Transverse colon (tissue), 4 donors: ENCODE measurements at regions of chr11 and their contacts with region 1.

Region 1: DNA sequence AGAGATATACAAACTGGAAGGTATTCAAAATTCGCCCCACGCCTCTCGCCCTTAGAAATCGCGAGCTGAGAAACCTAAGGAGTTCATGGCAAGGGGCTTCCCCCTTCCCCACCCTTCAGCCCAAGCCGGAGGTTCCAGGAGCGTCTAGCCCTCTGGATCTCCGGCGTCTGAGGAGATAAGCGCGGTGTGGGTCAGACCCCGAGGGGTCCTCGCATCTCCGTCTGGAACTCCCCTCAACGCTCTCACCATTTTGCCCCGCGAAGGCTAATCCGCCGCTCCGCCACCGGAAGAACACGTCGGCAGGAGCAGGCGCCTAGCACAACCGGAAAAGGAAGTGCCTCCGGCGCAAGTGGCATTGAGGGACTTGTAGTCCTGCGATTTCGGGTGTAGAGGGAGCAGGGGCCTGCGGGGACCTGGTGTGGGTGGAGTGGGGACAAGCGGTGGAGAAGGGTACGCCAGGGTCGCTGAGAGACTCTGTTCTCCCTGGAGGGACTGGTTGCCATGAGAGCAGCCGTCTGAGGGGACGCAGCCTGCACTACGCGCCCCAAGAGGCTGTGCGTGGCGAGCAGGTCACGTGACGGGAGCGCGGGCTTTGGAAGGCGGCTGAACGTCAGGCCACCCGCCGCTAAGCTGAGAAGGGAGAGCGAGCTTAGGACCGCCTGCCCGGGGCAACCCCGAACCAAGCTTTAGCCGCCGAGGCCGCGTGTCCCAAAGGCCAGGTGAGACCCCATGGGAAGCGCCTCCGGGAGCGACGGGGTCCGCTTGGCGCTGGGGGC is at the starts of genes FEN1 and TMEM258:
- DNase-seq: peak; percentile 88
- H3K4me3 ChIP-seq: peak within 1 kb of the TSS; percentile 75 to 81 (median 80)
- H3K27ac ChIP-seq: peak within 1 kb of the TSS; percentile 90 to 98 (median 94)
- H3K4me1 ChIP-seq: peaks cover 5 to 23% (median 22%) of the 10 kb centered on the region in 4 donors
- H3K27me3 ChIP-seq: no peaks in the 10 kb centered on the region
- CTCF ChIP-seq: peak in 3 of 5 experiments; percentile 8 to 44 (median 10)
- EP300 ChIP-seq: no peak
- POLR2A ChIP-seq: peak; percentile 69
- total RNA-seq, gene FEN1: 1.00 to 9.4 (median 4.5) TPM
- total RNA-seq, gene TMEM258: 8.2 to 34.7 (median 23.7) TPM

Region 2: DNA sequence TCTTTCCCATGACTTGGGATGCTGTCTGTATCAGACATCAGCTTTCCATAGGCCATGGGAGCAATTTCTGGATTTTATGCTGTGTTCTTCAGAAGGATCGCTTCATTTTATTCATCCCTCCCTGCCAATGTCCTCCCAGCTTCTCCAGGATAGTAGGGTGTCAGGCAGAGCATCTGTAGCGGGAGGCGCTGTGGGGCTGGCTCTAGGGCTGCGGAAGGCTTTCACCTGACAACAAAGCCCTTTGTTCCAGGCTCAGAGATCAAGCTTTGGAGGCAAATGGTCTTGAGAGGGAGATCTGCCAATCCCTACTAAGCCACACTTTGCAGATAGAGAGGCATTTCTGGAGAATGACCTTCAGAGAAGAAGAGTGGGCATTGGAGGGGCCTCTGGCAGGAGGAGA is 204.4 kb after region 1 on chr11:
- in situ Hi-C with region 1: no loop called
- intact Hi-C with region 1: no loop called
- DNase-seq: no peak
- H3K4me3 ChIP-seq: no peak overlapping the region
- H3K27ac ChIP-seq: no peak overlapping the region
- H3K4me1 ChIP-seq: peaks cover 4 to 17% (median 12%) of the 10 kb centered on the region in 4 donors
- H3K27me3 ChIP-seq: no peaks in the 10 kb centered on the region
- CTCF ChIP-seq: no peak
- EP300 ChIP-seq: no peak
- POLR2A ChIP-seq: no peak

Region 3: GRCh38 chr11:62108017-62108750 is 315.7 kb after region 1 on chr11:
- in situ Hi-C with region 1: loop called in 3 of 4 experiments (anchors 10 to 25 kb)
- intact Hi-C with region 1: no loop called
- DNase-seq: no peak
- H3K4me3 ChIP-seq: no peak overlapping the region
- H3K27ac ChIP-seq: no peak overlapping the region
- H3K4me1 ChIP-seq: peaks cover 6 to 26% (median 12%) of the 10 kb centered on the region in 4 donors
- H3K27me3 ChIP-seq: no peaks in the 10 kb centered on the region
- CTCF ChIP-seq: peak; percentile 72 to 85 (median 84)
- EP300 ChIP-seq: no peak
- POLR2A ChIP-seq: no peak

Region 4: DNA sequence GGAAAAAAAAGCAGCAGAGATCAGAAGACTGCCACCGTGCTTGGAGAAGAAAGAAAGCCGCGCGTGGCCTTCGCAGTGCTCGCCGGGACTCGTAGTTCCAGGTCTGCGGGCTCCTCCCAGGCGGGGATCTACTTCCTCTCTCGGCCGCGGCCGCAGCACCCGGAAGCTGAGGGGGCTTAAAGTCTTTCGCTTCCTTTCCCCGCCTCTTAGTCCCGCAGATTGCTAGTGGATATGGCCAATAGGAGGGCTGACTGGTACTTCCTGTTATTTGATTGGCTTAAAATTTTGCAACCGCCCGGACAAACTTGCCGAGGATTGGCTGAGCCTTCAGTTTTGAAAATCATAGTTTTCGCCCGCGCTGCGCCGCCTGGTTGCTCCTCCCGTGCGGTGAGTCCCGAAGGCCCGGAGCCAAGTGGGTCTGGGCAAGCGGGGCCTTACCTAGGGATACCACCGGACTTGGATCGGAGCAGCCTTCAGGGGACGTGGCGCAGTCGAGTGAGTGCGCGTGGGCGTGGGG is 331.2 kb after region 1 on chr11 and contains the start of gene INCENP:
- in situ Hi-C with region 1: loop called in 2 of 4 experiments (anchors 25 kb)
- intact Hi-C with region 1: no loop called
- DNase-seq: peak; percentile 96
- H3K4me3 ChIP-seq: peak within 1 kb of the TSS; percentile 72 to 95 (median 83)
- H3K27ac ChIP-seq: peak within 1 kb of the TSS; percentile 69 to 82 (median 77)
- H3K4me1 ChIP-seq: peaks cover 7 to 16% (median 14%) of the 10 kb centered on the region in 4 donors
- H3K27me3 ChIP-seq: no peaks in the 10 kb centered on the region
- CTCF ChIP-seq: no peak
- EP300 ChIP-seq: no peak
- POLR2A ChIP-seq: peak; percentile 32
- total RNA-seq, gene INCENP: 10.5 to 38.9 (median 26.1) TPM